ENCODE measurements at regions of chr12 and their contacts with region 1.

Region 1: DNA sequence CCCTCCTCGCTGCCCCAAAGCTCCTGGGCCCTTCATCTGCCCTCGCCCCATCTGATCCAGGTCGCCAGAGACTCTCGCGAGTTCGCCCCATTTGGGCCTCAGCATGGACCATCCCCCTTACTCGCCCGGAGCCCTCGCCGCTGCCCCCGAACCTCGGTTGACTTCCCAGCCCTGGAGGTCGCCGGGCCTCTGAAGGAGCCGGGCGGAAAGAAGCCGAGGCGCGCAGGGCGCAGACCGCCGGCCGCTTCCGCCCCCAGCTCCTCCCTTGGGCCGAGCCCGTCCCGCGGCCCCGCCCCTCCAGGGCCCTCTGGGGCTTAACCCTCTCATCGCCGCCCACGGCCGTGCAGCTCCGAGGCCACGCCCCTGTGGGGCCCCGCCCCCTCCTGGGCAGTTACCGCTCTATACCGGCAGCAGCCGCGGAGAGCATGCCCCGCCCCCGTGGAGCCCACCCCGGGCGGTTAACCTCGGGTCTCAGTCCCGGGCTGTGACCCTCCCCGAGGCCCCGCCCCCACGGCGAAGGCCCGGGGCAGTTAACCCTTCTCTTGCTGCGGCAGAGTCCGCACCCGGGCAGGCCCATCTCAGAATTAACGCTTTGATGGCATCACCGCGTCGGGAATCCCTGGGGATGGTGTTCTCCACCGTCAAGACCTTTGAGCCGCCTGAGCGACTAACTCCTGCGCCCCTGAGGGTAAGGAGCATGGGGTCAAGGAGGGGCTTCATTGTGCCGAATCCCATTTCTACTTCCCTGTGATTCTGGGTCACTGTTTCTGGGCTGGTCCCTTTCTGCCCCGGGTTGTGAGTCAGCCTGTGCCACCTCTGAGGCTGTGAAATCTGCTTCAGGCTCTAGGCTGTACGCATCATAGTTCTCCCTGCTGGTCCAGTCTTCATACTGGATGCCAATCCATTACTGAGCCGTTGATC is at the start of gene SPSB2:
- DNase-seq: peak; percentile 91 to 100
- H3K4me3 ChIP-seq: peak within 1 kb of the TSS; percentile 84
- H3K27ac ChIP-seq: peak within 1 kb of the TSS; percentile 37
- H3K4me1 ChIP-seq: peaks cover 36% of the 10 kb centered on the region
- H3K27me3 ChIP-seq: no peaks in the 10 kb centered on the region
- CTCF ChIP-seq: no peak
- total RNA-seq, gene SPSB2: 28.9 and 30.1 TPM in 2 replicates

Region 2: DNA sequence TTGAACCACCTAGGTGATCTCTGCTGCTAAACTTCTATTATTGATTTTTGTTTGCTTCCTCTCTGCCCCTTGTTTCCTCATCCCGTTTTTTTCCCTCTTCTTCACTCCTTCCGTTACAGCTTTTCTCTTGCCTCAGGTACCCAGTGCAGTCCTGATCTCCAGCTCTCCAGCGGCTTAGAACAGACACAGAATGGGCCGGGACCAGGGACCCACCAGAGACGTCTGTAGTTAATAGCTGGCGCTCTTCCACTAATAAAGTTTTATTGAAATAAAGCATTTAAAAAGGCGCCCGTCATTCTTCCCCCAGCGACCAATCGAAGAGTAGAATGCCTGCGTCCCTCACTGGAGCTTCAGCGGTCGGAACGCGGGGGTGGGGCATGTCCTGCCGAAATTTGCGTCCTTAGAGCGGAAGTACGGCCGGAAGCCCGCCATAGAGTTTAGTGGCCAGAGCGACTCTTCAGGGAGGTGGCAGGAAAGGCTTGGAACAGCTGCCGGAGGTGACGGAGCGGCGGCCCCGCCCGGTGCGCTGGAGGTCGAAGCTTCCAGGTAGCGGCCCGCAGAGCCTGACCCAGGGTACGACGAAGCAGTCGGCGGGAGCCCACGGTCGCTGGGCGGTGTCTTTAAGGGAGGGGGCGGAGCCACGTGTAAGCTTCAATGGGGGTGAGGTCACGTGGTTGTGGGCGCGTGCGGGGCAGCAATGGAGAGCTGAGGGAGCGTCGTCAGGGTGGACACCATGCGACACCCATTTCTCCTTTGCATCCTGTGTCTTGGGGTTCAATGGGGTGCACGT is 149.6 kb before region 1 on chr12 and contains the start of gene COPS7A:
- CTCF ChIA-PET with region 1: no interaction called
- POLR2A ChIA-PET with region 1: interaction called, 11 read pairs
- intact Hi-C with region 1: no loop called
- DNase-seq: peak; percentile 98 to 100
- H3K4me3 ChIP-seq: peak within 1 kb of the TSS; percentile 77
- H3K27ac ChIP-seq: peak within 1 kb of the TSS; percentile 60
- H3K4me1 ChIP-seq: peaks cover 19% of the 10 kb centered on the region
- H3K27me3 ChIP-seq: no peaks in the 10 kb centered on the region
- CTCF ChIP-seq: no peak
- total RNA-seq, gene COPS7A: 88.7 and 116 TPM in 2 replicates

Region 3: GRCh38 chr12:6890789-6891645 is 17.7 kb after region 1 on chr12:
- CTCF ChIA-PET with region 1: interaction called, 13 read pairs
- POLR2A ChIA-PET with region 1: interaction called, 20 read pairs
- intact Hi-C with region 1: loop called (anchors 1 kb)
- DNase-seq: peak; percentile 89 to 100
- H3K4me3 ChIP-seq: peak overlapping the region; percentile 57
- H3K27ac ChIP-seq: peak overlapping the region; percentile 90
- H3K4me1 ChIP-seq: peaks cover 15% of the 10 kb centered on the region
- H3K27me3 ChIP-seq: no peaks in the 10 kb centered on the region
- CTCF ChIP-seq: peak; percentile 74

Region 4: DNA sequence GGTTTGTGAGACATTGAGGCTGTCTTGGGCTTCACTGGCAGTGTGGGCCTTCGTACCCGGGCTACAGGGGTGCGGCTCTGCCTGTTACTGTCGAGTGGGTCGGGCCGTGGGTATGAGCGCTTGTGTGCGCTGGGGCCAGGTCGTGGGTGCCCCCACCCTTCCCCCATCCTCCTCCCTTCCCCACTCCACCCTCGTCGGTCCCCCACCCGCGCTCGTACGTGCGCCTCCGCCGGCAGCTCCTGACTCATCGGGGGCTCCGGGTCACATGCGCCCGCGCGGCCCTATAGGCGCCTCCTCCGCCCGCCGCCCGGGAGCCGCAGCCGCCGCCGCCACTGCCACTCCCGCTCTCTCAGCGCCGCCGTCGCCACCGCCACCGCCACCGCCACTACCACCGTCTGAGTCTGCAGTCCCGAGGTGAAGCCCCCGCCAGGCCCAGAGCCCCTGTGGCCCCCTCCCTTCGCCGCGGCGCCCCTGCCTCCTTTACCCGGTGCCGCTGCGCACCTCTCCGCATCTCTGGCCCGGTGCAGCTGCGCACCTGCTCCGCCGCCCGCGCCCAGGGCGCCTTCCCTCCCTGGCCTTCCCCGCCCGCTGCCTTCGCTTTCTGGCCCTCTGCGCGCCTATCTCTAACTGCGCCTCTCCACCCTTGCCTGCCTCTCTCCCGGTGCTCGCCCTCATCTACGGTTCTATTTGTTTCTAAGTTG is 41.0 kb after region 1 on chr12 and contains the start of gene ENO2:
- CTCF ChIA-PET with region 1: interaction called, 3 read pairs
- POLR2A ChIA-PET with region 1: interaction called, 3 read pairs
- intact Hi-C with region 1: loop called (anchors 1 kb)
- DNase-seq: peak in 1 of 2 experiments; percentile 75
- H3K4me3 ChIP-seq: peak within 1 kb of the TSS; percentile 77
- H3K27ac ChIP-seq: no peak within 1 kb of the TSS
- H3K4me1 ChIP-seq: peaks cover 5% of the 10 kb centered on the region; the same call in 1 of the 2 replicates
- H3K27me3 ChIP-seq: peaks cover 11% of the 10 kb centered on the region
- CTCF ChIP-seq: no peak
- total RNA-seq, gene ENO2: 38.8 and 56.6 TPM in 2 replicates

Region 5: DNA sequence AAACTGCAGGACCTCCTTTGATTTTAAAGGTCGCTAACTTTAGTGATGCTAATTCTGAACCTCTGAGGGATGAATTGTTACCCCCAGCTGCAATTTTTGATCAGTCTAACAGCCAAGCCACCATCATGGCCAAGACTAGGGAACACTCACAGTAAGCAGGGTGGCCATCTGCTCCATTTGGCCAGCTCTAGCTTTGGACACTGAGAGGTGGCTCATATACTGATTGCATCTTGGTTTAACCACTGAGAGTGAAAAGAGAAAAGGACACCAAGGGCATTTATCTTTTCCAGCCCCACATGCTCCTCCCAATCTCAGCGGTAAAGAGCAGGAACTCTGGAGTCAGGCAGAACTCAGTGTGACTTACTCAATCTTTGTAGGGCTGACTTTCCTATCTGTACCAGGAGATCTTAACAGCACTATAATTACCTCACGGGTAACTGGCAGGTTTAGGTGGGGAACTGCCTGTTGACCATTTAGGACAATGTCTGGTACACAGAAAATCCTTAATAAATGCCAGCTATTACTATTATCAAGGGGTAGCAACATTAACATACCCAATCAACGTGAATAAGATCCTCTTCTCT is 138.8 kb after region 1 on chr12:
- CTCF ChIA-PET with region 1: no interaction called
- POLR2A ChIA-PET with region 1: no interaction called
- intact Hi-C with region 1: no loop called
- DNase-seq: no peak
- H3K4me3 ChIP-seq: no peak overlapping the region
- H3K27ac ChIP-seq: no peak overlapping the region
- H3K4me1 ChIP-seq: peaks cover 25% of the 10 kb centered on the region
- H3K27me3 ChIP-seq: no peaks in the 10 kb centered on the region
- CTCF ChIP-seq: no peak

Region 6: GRCh38 chr12:7092229-7092985 is 219.1 kb after region 1 on chr12 and contains the start of gene C1R:
- CTCF ChIA-PET with region 1: interaction called, 4 read pairs
- POLR2A ChIA-PET with region 1: no interaction called
- intact Hi-C with region 1: loop called (anchors 5 kb)
- DNase-seq: peak in 1 of 2 experiments; percentile 76
- H3K4me3 ChIP-seq: peak within 1 kb of the TSS; percentile 41; the same call in 1 of the 2 replicates
- H3K27ac ChIP-seq: no peak within 1 kb of the TSS
- H3K4me1 ChIP-seq: no peaks in the 10 kb centered on the region
- H3K27me3 ChIP-seq: no peaks in the 10 kb centered on the region
- CTCF ChIP-seq: peak; percentile 93
- total RNA-seq, gene C1R: 20.5 and 24.0 TPM in 2 replicates

Region 7: GRCh38 chr12:7142056-7142644 is 268.8 kb after region 1 on chr12:
- CTCF ChIA-PET with region 1: no interaction called
- POLR2A ChIA-PET with region 1: interaction called, 32 read pairs
- intact Hi-C with region 1: no loop called
- DNase-seq: peak; percentile 52 to 61
- H3K4me3 ChIP-seq: no peak overlapping the region
- H3K27ac ChIP-seq: no peak overlapping the region
- H3K4me1 ChIP-seq: no peaks in the 10 kb centered on the region
- H3K27me3 ChIP-seq: no peaks in the 10 kb centered on the region
- CTCF ChIP-seq: peak; percentile 91

Region 8: GRCh38 chr12:7207866-7208625 is 334.7 kb after region 1 on chr12:
- CTCF ChIA-PET with region 1: no interaction called
- POLR2A ChIA-PET with region 1: no interaction called
- intact Hi-C with region 1: no loop called
- DNase-seq: no peak
- H3K4me3 ChIP-seq: no peak overlapping the region
- H3K27ac ChIP-seq: no peak overlapping the region
- H3K4me1 ChIP-seq: no peaks in the 10 kb centered on the region
- H3K27me3 ChIP-seq: no peaks in the 10 kb centered on the region
- CTCF ChIP-seq: no peak